Astrocyte of the cerebellum (primary cell): ENCODE measurements at regions of chr13 and their contacts with region 1.

Region 1: DNA sequence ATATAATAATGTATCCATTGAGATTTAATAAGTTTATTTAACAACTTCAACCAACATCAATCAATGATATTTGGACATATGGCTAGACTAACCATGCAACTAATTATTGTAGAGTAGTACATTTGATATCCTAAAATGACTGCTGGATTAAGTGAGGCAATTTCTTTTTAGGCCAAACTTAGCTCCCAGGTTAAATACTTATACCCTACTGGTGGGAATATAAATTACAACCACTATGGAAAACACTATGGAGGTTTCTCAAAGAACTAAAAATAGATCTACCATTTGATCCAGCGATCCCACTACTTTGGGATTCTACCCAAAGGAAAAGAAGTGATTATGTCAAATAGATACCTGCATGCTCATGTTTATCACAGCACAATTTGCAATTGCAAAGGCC is 345.8 kb downstream of the RBM26 start:
- DNase-seq: no peak
- H3K4me3 ChIP-seq: no peak overlapping the region
- CTCF ChIP-seq: no peak

Region 2: GRCh38 chr13:77810430-77810829 is 1249.8 kb before region 1 on chr13:
- in situ Hi-C with region 1: loop called (anchors 10 kb)
- DNase-seq: no peak
- H3K4me3 ChIP-seq: no peak overlapping the region
- CTCF ChIP-seq: peak; percentile 48